ENCODE measurements at regions of chr2 and their contacts with region 1.

Region 1: GRCh38 chr2:101252408-101253012 is at the start of gene CNOT11:
- DNase-seq: peak; percentile 99
- ATAC-seq: peak; percentile 85
- H3K4me3 ChIP-seq: peak within 1 kb of the TSS; percentile 68 to 91 (median 88)
- H3K4me3 Mint-ChIP-seq: peak within 1 kb of the TSS; percentile 95
- H3K27ac ChIP-seq: peak within 1 kb of the TSS; percentile 83 to 98
- H3K27ac Mint-ChIP-seq: peak within 1 kb of the TSS; percentile 92
- H3K4me1 ChIP-seq: peaks cover 20 to 30% of the 10 kb centered on the region in 2 donors
- H3K4me1 Mint-ChIP-seq: peaks cover 44% of the 10 kb centered on the region
- H3K27me3 ChIP-seq: no peaks in the 10 kb centered on the region
- H3K27me3 Mint-ChIP-seq: no peaks in the 10 kb centered on the region
- CTCF ChIP-seq: no peak
- total RNA-seq, gene CNOT11: 46.3 and 46.7 TPM in 2 replicates

Region 2: GRCh38 chr2:101001691-101002561 is 250.6 kb before region 1 on chr2 and contains the start of gene RPL31:
- CTCF ChIA-PET with region 1: interaction called, 3 read pairs
- POLR2A ChIA-PET with region 1: interaction called, 4 read pairs
- intact Hi-C with region 1: loop called (anchors 1 kb)
- DNase-seq: peak; percentile 95
- ATAC-seq: peak; percentile 97
- H3K4me3 ChIP-seq: peak within 1 kb of the TSS; percentile 80 to 99 (median 92)
- H3K4me3 Mint-ChIP-seq: peak within 1 kb of the TSS; percentile 88
- H3K27ac ChIP-seq: peak within 1 kb of the TSS; percentile 84 to 91
- H3K27ac Mint-ChIP-seq: peak within 1 kb of the TSS; percentile 96
- H3K4me1 ChIP-seq: peaks cover 15 to 21% of the 10 kb centered on the region in 2 donors
- H3K4me1 Mint-ChIP-seq: peaks cover 40% of the 10 kb centered on the region
- H3K27me3 ChIP-seq: no peaks in the 10 kb centered on the region
- H3K27me3 Mint-ChIP-seq: no peaks in the 10 kb centered on the region
- CTCF ChIP-seq: no peak
- total RNA-seq, gene RPL31: 1,595 and 1,767 TPM in 2 replicates

Region 3: DNA sequence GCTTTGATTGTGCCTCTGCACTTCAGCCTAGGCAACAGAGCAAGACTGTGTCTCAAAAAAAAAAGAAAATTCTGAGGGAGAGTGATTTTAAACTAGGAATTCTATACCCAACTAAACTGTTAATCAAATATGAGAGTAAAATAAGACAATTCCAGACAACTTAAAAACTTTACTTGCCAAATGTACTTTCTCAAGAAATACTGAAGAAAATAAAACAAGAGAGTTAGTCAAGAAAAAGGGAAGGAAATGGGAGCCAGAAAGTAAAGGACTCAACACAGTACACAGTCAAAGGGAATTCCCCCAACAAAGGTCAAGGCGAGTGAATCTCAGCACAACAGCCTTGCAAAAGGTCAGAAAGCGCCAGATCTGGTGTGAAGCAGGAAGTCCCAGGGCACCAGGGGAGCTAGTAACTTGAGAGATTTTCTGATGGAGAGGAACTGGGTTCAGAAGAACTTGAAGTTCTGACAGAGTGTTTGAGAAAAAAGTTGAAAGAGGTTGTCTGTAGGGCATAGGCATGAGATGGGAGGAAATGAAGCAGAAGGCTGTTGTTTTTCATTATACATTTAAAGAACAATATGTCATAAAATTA is 78.7 kb before region 1 on chr2:
- CTCF ChIA-PET with region 1: interaction called, 3 read pairs
- POLR2A ChIA-PET with region 1: no interaction called
- intact Hi-C with region 1: loop called (anchors 5 kb)
- DNase-seq: peak; percentile 62
- ATAC-seq: peak; percentile 99
- H3K4me3 ChIP-seq: no peak overlapping the region
- H3K4me3 Mint-ChIP-seq: peak overlapping the region; percentile 44
- H3K27ac ChIP-seq: peak overlapping the region in 1 of 2 donors; percentile 69
- H3K27ac Mint-ChIP-seq: peak overlapping the region; percentile 84
- H3K4me1 ChIP-seq: peaks cover 14 to 20% of the 10 kb centered on the region in 2 donors
- H3K4me1 Mint-ChIP-seq: peaks cover 24% of the 10 kb centered on the region
- H3K27me3 ChIP-seq: no peaks in the 10 kb centered on the region
- H3K27me3 Mint-ChIP-seq: no peaks in the 10 kb centered on the region
- CTCF ChIP-seq: no peak

Region 4: DNA sequence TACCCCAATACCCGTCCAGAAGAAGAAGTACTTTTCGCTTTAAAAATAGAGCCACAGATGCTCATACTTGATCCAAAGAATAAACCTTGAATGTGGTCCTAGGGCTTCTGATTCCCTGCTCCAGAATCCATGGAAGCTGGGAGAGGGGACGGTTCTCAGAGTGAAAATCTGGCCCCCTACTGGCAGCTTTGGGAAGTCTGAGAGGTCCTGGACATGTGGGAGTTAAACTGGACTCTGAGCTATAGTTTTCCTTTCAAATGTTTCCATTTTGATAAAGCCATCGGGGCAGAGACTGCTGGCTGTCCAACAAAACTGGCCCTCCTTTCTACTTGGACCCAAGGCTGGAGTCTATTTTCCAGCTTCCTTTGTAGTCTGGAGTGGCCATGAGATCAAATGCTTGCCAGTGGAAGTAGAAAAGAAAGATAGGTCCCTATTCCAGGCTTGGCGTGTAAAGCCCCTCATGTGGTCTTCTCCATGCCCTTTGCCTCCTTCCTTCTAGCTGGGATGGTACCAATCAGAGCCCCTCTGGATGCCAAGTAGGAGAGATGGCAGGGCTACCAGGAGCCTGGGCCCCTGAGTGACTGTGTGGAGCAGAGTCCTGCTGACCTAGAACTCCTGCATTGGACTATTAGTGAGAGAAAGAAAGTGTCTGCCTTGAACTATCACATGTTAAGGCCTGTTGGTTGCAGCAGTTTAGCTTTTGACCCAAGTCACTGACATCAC is 63.7 kb before region 1 on chr2:
- CTCF ChIA-PET with region 1: no interaction called
- POLR2A ChIA-PET with region 1: no interaction called
- intact Hi-C with region 1: no loop called
- DNase-seq: no peak
- ATAC-seq: no peak
- H3K4me3 ChIP-seq: no peak overlapping the region
- H3K4me3 Mint-ChIP-seq: no peak overlapping the region
- H3K27ac ChIP-seq: no peak overlapping the region
- H3K27ac Mint-ChIP-seq: no peak overlapping the region
- H3K4me1 ChIP-seq: no peaks in the 10 kb centered on the region
- H3K4me1 Mint-ChIP-seq: peaks cover 4% of the 10 kb centered on the region
- H3K27me3 ChIP-seq: peaks cover 0 to 3% (median under 1%) of the 10 kb centered on the region in 4 experiments
- H3K27me3 Mint-ChIP-seq: peaks cover 8% of the 10 kb centered on the region
- CTCF ChIP-seq: no peak

Region 5: GRCh38 chr2:101463891-101464641 is 211.6 kb after region 1 on chr2:
- CTCF ChIA-PET with region 1: no interaction called
- POLR2A ChIA-PET with region 1: no interaction called
- intact Hi-C with region 1: no loop called
- DNase-seq: no peak
- ATAC-seq: no peak
- H3K4me3 ChIP-seq: no peak overlapping the region
- H3K4me3 Mint-ChIP-seq: no peak overlapping the region
- H3K27ac ChIP-seq: no peak overlapping the region
- H3K27ac Mint-ChIP-seq: no peak overlapping the region
- H3K4me1 ChIP-seq: no peaks in the 10 kb centered on the region
- H3K4me1 Mint-ChIP-seq: peaks cover 7% of the 10 kb centered on the region
- H3K27me3 ChIP-seq: peaks cover 0 to 10% (median 4%) of the 10 kb centered on the region in 4 experiments
- H3K27me3 Mint-ChIP-seq: peaks cover 37% of the 10 kb centered on the region
- CTCF ChIP-seq: no peak

Region 6: GRCh38 chr2:101781326-101781725 is 528.8 kb after region 1 on chr2:
- CTCF ChIA-PET with region 1: no interaction called
- POLR2A ChIA-PET with region 1: no interaction called
- intact Hi-C with region 1: no loop called
- DNase-seq: peak; percentile 75
- ATAC-seq: peak; percentile 87
- H3K4me3 ChIP-seq: no peak overlapping the region
- H3K4me3 Mint-ChIP-seq: peak overlapping the region; percentile 76
- H3K27ac ChIP-seq: peak overlapping the region; percentile 36 to 64
- H3K27ac Mint-ChIP-seq: peak overlapping the region; percentile 83
- H3K4me1 ChIP-seq: peaks cover 75 to 80% of the 10 kb centered on the region in 2 donors
- H3K4me1 Mint-ChIP-seq: peaks cover 86% of the 10 kb centered on the region
- H3K27me3 ChIP-seq: no peaks in the 10 kb centered on the region
- H3K27me3 Mint-ChIP-seq: no peaks in the 10 kb centered on the region
- CTCF ChIP-seq: no peak